Psoas muscle (tissue), 8 donors: ENCODE measurements at regions of chr1 and their contacts with region 1.

Region 1: GRCh38 chr1:65009724-65010420 is 43.5 kb upstream of the JAK1 start:
- DNase-seq: no peak
- ATAC-seq: no peak
- H3K4me3 ChIP-seq: no peak overlapping the region
- H3K27ac ChIP-seq: no peak overlapping the region
- H3K4me1 ChIP-seq: no peaks in the 10 kb centered on the region
- H3K27me3 ChIP-seq: no peaks in the 10 kb centered on the region
- CTCF ChIP-seq: no peak

Region 2: DNA sequence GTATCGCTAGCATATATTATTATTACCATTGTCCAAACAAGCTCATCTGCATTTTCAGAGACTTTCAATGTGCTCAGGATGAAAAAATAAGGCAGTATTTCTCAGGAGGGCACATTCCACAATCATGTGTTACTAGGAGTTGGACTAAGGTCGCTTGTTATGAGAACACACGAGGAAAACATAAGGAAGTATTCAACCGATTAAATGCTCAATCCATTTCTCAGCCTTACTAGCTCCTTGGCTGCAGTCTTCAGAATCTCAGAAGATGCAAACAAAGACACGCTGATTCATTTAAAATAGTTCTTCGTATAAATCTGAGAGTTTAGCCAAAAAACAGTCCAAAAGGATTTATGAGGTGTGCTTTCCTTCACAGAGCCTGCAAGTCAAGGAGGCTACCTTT is 38.5 kb after region 1 on chr1:
- intact Hi-C with region 1: loop called in 1 of 2 experiments (anchors 5 kb)
- DNase-seq: no peak
- ATAC-seq: no peak
- H3K4me3 ChIP-seq: no peak overlapping the region
- H3K27ac ChIP-seq: no peak overlapping the region
- H3K4me1 ChIP-seq: no peaks in the 10 kb centered on the region
- H3K27me3 ChIP-seq: no peaks in the 10 kb centered on the region
- CTCF ChIP-seq: no peak

Region 3: DNA sequence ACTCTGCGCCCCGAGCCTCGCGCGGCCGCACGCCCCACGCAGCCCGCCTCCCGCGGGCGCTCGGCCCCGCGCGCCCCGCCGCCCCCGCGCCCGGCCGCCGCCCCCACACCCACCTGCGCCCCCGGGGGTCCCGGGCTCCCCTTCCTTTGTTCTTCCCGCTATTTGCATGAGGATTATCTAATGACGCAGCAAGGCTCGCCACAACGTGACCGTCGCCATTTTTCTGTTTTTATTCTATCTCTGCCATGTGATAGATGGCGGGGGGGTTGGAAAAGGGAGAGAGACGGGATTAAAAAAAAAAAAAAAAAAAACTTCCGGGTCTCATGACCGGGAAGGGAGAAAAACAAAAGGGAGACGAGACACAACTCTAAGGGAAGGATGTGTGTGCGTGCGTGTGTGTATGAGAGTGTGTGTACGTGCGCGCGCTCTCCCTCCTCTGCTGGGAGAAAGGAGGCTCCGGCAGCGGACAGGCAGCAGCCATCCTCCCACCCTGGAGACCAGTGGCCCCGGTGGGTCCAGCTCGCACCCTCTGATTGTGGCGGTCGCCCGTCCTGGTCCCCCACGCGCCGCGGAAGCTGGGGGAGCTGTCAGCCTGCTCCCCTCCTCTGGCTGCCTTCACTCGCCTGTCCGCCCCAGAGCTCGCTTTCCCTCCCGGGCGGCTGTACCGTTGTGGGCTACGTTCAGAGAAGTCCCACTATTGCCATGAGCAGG is 57.8 kb after region 1 on chr1:
- intact Hi-C with region 1: no loop called
- DNase-seq: peak; percentile 63 to 83
- ATAC-seq: peak; percentile 43 to 55 (median 44)
- H3K4me3 ChIP-seq: peak overlapping the region; percentile 94
- H3K27ac ChIP-seq: peak overlapping the region; percentile 100
- H3K4me1 ChIP-seq: peaks cover 27% of the 10 kb centered on the region
- H3K27me3 ChIP-seq: no peaks in the 10 kb centered on the region
- CTCF ChIP-seq: no peak